Prostate gland (tissue), 2 donors: ENCODE measurements at regions of chr12 and their contacts with region 1.

Region 1: DNA sequence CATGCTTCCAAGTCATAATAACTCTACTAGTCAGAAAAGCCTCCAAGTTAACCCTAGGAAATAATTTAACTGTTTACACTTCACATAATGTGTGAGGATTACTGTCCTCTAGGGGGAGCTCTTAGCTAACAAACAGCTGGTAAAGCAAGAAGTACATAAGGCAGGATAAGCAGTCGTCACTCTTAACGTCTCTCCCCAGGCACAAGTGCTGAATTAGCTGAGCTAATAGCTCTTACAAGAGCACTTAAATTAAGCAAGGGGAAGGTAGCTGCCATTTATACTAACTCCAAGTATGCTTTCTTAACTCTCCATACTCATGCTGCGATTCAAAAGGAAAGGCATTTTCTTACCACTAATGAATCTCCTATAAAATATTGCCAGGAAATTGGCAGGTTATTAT is 79.3 kb upstream of the TSPAN11 start:
- DNase-seq: peak; percentile 23
- H3K4me3 ChIP-seq: no peak overlapping the region
- H3K27ac ChIP-seq: no peak overlapping the region
- H3K4me1 ChIP-seq: no peaks in the 10 kb centered on the region
- H3K27me3 ChIP-seq: no peaks in the 10 kb centered on the region
- CTCF ChIP-seq: peak; percentile 39 to 73 (median 68)
- POLR2A ChIP-seq: no peak

Region 2: DNA sequence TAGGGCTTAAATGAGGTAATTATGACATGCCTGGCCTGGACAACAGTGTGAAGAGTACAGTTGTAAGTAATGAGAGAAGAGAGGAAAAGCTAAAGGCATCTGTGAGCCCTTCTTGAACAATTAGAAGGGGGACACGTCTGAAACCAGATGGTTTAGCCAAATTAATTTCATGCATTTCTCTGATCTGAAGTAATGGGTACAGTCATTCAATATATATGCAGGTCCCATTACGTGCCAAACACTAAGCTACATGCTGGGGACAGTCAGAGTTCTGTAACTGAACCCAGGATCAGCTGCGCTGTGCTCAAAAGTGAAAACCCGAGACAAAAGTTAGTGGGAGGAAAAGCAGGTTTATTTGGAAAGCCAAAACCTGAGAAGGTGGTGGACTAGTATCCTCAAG is 856.3 kb before region 1 on chr12:
- intact Hi-C with region 1: no loop called
- DNase-seq: no peak
- H3K4me3 ChIP-seq: no peak overlapping the region
- H3K27ac ChIP-seq: no peak overlapping the region
- H3K4me1 ChIP-seq: no peaks in the 10 kb centered on the region
- H3K27me3 ChIP-seq: no peaks in the 10 kb centered on the region
- CTCF ChIP-seq: no peak
- POLR2A ChIP-seq: no peak

Region 3: GRCh38 chr12:30695199-30696103 is 151.8 kb before region 1 on chr12 and contains the start of gene IPO8:
- intact Hi-C with region 1: no loop called
- DNase-seq: peak; percentile 88
- H3K4me3 ChIP-seq: peak within 1 kb of the TSS; percentile 85 to 87
- H3K27ac ChIP-seq: peak within 1 kb of the TSS; percentile 74 to 77
- H3K4me1 ChIP-seq: peaks cover 5% of the 10 kb centered on the region
- H3K27me3 ChIP-seq: no peaks in the 10 kb centered on the region
- CTCF ChIP-seq: peak in 3 of 4 experiments; percentile 7 to 39 (median 10)
- POLR2A ChIP-seq: no peak
- total RNA-seq, gene IPO8: 31.9 to 40.3 TPM

Region 4: GRCh38 chr12:30746190-30746589 is 101.1 kb before region 1 on chr12:
- intact Hi-C with region 1: no loop called
- DNase-seq: no peak
- H3K4me3 ChIP-seq: no peak overlapping the region
- H3K27ac ChIP-seq: no peak overlapping the region
- H3K4me1 ChIP-seq: no peaks in the 10 kb centered on the region
- H3K27me3 ChIP-seq: no peaks in the 10 kb centered on the region
- CTCF ChIP-seq: no peak
- POLR2A ChIP-seq: no peak

Region 5: GRCh38 chr12:30989754-30990153 is 142.5 kb after region 1 on chr12:
- intact Hi-C with region 1: loop called (anchors 2 kb)
- DNase-seq: peak; percentile 26
- H3K4me3 ChIP-seq: no peak overlapping the region
- H3K27ac ChIP-seq: no peak overlapping the region
- H3K4me1 ChIP-seq: no peaks in the 10 kb centered on the region
- H3K27me3 ChIP-seq: no peaks in the 10 kb centered on the region
- CTCF ChIP-seq: peak in 2 of 4 experiments; percentile 23 to 37
- POLR2A ChIP-seq: no peak

Region 6: GRCh38 chr12:31238764-31239387 is 391.6 kb after region 1 on chr12:
- intact Hi-C with region 1: loop called (anchors 10 kb)
- DNase-seq: peak; percentile 64
- H3K4me3 ChIP-seq: no peak overlapping the region
- H3K27ac ChIP-seq: no peak overlapping the region
- H3K4me1 ChIP-seq: no peaks in the 10 kb centered on the region
- H3K27me3 ChIP-seq: no peaks in the 10 kb centered on the region
- CTCF ChIP-seq: peak in 3 of 4 experiments; percentile 35 to 72 (median 64)
- POLR2A ChIP-seq: no peak

Region 7: DNA sequence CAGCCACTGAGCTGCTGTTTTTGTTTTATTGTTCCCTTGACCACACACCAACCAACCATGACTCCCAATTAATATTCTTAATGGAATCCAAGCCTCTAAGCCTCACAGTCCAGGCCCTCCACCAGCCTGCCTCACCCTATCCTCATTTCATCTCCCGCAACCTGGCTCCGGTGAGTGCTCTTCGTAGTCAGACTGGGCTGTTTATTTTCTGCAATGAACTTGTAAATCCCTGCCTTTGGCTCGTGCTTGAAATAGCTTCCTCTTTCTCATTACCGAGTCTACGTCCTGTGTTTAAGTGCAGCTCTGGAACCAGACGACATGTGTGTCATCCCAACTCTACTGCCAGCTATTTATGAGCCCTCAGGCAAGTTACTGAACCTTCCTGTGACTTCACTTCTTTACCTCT is 799.8 kb after region 1 on chr12:
- intact Hi-C with region 1: no loop called
- DNase-seq: no peak
- H3K4me3 ChIP-seq: no peak overlapping the region
- H3K27ac ChIP-seq: no peak overlapping the region
- H3K4me1 ChIP-seq: no peaks in the 10 kb centered on the region
- H3K27me3 ChIP-seq: no peaks in the 10 kb centered on the region
- CTCF ChIP-seq: no peak
- POLR2A ChIP-seq: no peak